ENCODE measurements at regions of chr15 and their contacts with region 1.

Region 1: DNA sequence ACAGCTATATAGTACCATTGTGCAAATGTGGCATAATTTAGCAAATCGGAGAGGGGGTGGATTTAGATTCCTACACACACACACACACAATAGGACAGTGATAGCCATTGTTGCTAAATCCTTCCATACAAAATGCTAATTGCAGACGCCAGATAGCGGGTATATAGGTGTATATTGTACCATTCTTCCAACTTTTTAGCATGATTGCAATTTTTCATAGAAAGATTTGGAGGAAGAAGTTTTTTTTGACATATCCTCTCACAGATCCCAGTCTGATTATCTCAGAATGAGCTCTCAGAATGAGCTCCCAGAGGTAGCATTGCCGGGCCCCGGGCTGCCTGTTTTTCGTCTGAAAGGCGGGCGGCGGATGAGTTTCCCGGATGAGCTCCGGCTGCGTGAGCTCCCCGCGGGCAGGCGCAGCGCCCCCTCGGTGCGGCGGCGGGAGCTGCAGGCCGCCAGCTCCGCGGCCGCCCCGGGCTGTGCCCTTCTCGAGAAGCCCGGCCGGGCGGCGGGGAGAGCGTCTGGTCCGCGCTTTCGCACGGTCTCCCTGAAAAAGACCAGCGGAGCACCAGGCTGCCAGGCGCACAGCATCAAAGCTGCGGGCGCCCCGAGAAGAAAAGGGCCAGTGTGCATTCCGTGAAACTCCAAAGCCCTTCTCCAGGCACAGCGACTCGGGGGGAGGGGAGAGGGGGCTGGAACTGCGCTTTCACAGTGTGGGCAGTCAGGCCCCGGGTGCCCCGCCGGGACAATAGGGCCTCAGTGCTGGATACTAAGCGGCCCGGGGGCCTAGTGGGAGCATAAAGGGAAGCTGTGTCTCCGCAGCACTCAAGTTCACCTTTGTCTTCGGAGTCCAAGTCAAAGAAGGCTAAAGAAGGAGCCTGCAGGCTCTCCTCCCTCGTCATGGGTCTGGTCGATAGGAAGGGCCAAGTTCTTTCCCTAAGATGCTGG is 12.0 kb upstream of the SHC4 start:
- DNase-seq: peak in 1 of 2 experiments; percentile 73
- H3K4me3 ChIP-seq: peak overlapping the region; percentile 55; the same call in 1 of the 2 replicates
- H3K27ac ChIP-seq: no peak overlapping the region
- H3K4me1 ChIP-seq: peaks cover 14% of the 10 kb centered on the region
- H3K27me3 ChIP-seq: no peaks in the 10 kb centered on the region
- CTCF ChIP-seq: peak; percentile 79

Region 2: GRCh38 chr15:49015896-49016295 is 40.1 kb after region 1 on chr15:
- CTCF ChIA-PET with region 1: no interaction called
- POLR2A ChIA-PET with region 1: no interaction called
- intact Hi-C with region 1: no loop called
- DNase-seq: no peak
- H3K4me3 ChIP-seq: no peak overlapping the region
- H3K27ac ChIP-seq: no peak overlapping the region
- H3K4me1 ChIP-seq: no peaks in the 10 kb centered on the region
- H3K27me3 ChIP-seq: no peaks in the 10 kb centered on the region
- CTCF ChIP-seq: no peak

Region 3: GRCh38 chr15:49145651-49146609 is 170.2 kb after region 1 on chr15:
- CTCF ChIA-PET with region 1: interaction called, 13 read pairs
- POLR2A ChIA-PET with region 1: no interaction called
- intact Hi-C with region 1: no loop called
- DNase-seq: peak; percentile 9 to 62
- H3K4me3 ChIP-seq: peak overlapping the region; percentile 16; the same call in 1 of the 2 replicates
- H3K27ac ChIP-seq: peak overlapping the region; percentile 64
- H3K4me1 ChIP-seq: peaks cover 24% of the 10 kb centered on the region
- H3K27me3 ChIP-seq: no peaks in the 10 kb centered on the region
- CTCF ChIP-seq: peak; percentile 69

Region 4: GRCh38 chr15:49235446-49236124 is 259.8 kb after region 1 on chr15:
- CTCF ChIA-PET with region 1: no interaction called
- POLR2A ChIA-PET with region 1: no interaction called
- intact Hi-C with region 1: no loop called
- DNase-seq: peak in 1 of 2 experiments; percentile 30
- H3K4me3 ChIP-seq: no peak overlapping the region
- H3K27ac ChIP-seq: no peak overlapping the region
- H3K4me1 ChIP-seq: no peaks in the 10 kb centered on the region
- H3K27me3 ChIP-seq: no peaks in the 10 kb centered on the region
- CTCF ChIP-seq: peak; percentile 71